Calu3 (cell line): ENCODE measurements at regions of chr17 and their contacts with region 1.

Region 1: GRCh38 chr17:55513885-55514591 is 2.8 kb upstream of the SMIM36 start:
- DNase-seq: peak; percentile 68
- H3K4me3 Mint-ChIP-seq: no peak overlapping the region
- H3K27ac Mint-ChIP-seq: no peak overlapping the region
- H3K4me1 Mint-ChIP-seq: peaks cover 8% of the 10 kb centered on the region
- H3K27me3 Mint-ChIP-seq: no peaks in the 10 kb centered on the region
- CTCF ChIP-seq: peak; percentile 34

Region 2: GRCh38 chr17:54992797-54993639 is 521.0 kb before region 1 on chr17:
- CTCF ChIA-PET with region 1: interaction called, 3 read pairs
- intact Hi-C with region 1: loop called (anchors 1 kb)
- DNase-seq: peak; percentile 10
- H3K4me3 Mint-ChIP-seq: no peak overlapping the region
- H3K27ac Mint-ChIP-seq: no peak overlapping the region
- H3K4me1 Mint-ChIP-seq: no peaks in the 10 kb centered on the region
- H3K27me3 Mint-ChIP-seq: no peaks in the 10 kb centered on the region
- CTCF ChIP-seq: peak; percentile 23

Region 3: GRCh38 chr17:55356434-55357328 is 157.4 kb before region 1 on chr17:
- CTCF ChIA-PET with region 1: interaction called, 4 read pairs
- intact Hi-C with region 1: loop called (anchors 5 kb)
- DNase-seq: peak; percentile 70
- H3K4me3 Mint-ChIP-seq: no peak overlapping the region
- H3K27ac Mint-ChIP-seq: no peak overlapping the region
- H3K4me1 Mint-ChIP-seq: no peaks in the 10 kb centered on the region
- H3K27me3 Mint-ChIP-seq: no peaks in the 10 kb centered on the region
- CTCF ChIP-seq: peak; percentile 32

Region 4: DNA sequence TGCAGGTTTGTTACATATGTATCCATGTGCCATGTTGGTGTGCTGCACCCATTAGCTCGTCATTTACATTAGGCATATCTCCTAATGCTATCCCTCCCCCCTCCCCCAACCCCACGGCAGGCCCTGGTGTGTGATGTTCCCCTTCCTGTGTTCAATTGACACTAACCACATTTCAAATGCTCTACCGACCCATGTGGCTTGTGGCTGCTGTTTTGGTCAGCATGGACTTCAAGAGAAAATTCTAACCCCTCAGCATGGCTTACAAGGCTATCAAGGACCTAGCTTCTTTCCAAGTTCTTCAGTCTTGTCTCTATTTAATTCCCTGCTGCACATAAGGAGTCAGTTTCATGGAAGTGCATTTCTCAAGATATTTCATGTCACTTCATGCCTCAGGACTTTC is 145.3 kb before region 1 on chr17:
- CTCF ChIA-PET with region 1: no interaction called
- intact Hi-C with region 1: no loop called
- DNase-seq: no peak
- H3K4me3 Mint-ChIP-seq: no peak overlapping the region
- H3K27ac Mint-ChIP-seq: no peak overlapping the region
- H3K4me1 Mint-ChIP-seq: no peaks in the 10 kb centered on the region
- H3K27me3 Mint-ChIP-seq: no peaks in the 10 kb centered on the region
- CTCF ChIP-seq: no peak

Region 5: DNA sequence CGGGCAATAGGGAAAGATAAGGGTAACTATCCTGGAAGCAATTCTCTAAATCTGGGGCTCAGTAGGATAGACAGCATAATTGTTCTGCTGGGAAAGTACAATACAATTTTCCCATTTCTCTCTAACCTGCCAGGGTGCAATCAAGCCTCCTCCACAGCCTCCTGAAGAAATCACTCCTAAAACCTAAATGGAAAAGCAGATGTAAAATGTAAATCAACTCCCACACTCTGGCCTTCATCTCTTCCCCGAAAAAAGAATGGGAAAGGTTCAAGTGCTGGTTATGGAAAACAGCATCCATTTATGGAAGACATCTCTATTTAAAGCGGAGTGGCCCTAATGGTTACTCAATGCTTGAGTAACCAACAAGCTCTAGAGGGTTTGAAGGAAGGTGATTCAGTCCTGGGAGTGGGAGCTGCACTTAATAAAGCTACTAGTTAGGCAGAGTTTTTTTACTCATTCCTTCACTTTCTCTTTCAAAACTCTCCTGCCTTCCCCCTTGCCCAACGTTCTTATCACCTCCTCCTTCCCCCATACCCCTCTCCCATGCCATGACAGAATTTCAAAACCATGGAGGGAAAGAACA is 97.5 kb before region 1 on chr17:
- CTCF ChIA-PET with region 1: interaction called, 3 read pairs
- intact Hi-C with region 1: loop called (anchors 5 kb)
- DNase-seq: no peak
- H3K4me3 Mint-ChIP-seq: no peak overlapping the region
- H3K27ac Mint-ChIP-seq: no peak overlapping the region
- H3K4me1 Mint-ChIP-seq: peaks cover 35% of the 10 kb centered on the region
- H3K27me3 Mint-ChIP-seq: no peaks in the 10 kb centered on the region
- CTCF ChIP-seq: no peak

Region 6: GRCh38 chr17:55433629-55434305 is 80.3 kb before region 1 on chr17:
- CTCF ChIA-PET with region 1: no interaction called
- intact Hi-C with region 1: loop called (anchors 2 kb)
- DNase-seq: peak; percentile 52
- H3K4me3 Mint-ChIP-seq: peak overlapping the region; percentile 25
- H3K27ac Mint-ChIP-seq: peak overlapping the region; percentile 90
- H3K4me1 Mint-ChIP-seq: peaks cover 57% of the 10 kb centered on the region
- H3K27me3 Mint-ChIP-seq: no peaks in the 10 kb centered on the region
- CTCF ChIP-seq: no peak